WTC11 (cell line): ENCODE measurements at regions of chr11 and their contacts with region 1.

Region 1: DNA sequence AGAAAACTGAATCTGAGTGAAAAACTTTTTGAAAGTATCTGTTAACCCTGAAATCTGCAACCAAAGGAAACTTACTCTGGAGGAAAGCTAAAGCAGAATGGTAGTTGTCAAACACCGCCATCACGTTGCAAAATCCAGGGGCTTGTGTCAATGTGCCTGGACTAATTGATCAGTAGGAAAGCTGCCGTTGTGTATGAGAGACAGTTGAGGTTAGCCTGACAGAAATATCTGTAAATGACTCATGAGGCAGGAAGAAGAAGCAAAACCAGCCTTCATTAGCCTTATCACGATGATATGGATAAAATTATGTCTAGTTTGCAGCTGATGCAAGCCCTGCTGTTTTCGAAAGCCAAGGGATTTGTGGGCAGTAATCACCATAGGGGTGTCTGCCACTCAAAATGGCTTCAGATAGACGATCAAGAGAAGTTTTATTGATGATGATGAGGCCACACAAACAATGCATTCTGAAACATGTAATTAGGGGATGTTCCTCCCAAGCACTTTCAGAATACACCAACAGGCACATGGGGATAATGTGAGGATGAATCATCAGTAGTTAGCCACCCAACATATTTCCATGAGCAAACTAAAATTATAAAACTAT is 8.9 kb downstream of the SCGB1A1 start:
- DNase-seq: no peak
- ATAC-seq: no peak
- H3K4me3 Mint-ChIP-seq: no peak overlapping the region
- H3K27ac Mint-ChIP-seq: peak overlapping the region; percentile 2; the same call in 1 of the 2 replicates
- H3K4me1 Mint-ChIP-seq: peaks cover 8% of the 10 kb centered on the region
- H3K27me3 Mint-ChIP-seq: peaks cover 22% of the 10 kb centered on the region
- CTCF ChIP-seq: no peak

Region 2: GRCh38 chr11:62411524-62411923 is 16.2 kb before region 1 on chr11:
- CTCF ChIA-PET with region 1: interaction called, 31 read pairs
- POLR2A ChIA-PET with region 1: no interaction called
- DNase-seq: no peak
- ATAC-seq: no peak
- H3K4me3 Mint-ChIP-seq: no peak overlapping the region
- H3K27ac Mint-ChIP-seq: no peak overlapping the region
- H3K4me1 Mint-ChIP-seq: no peaks in the 10 kb centered on the region
- H3K27me3 Mint-ChIP-seq: no peaks in the 10 kb centered on the region; the same call in 1 of the 2 replicates
- CTCF ChIP-seq: no peak

Region 3: DNA sequence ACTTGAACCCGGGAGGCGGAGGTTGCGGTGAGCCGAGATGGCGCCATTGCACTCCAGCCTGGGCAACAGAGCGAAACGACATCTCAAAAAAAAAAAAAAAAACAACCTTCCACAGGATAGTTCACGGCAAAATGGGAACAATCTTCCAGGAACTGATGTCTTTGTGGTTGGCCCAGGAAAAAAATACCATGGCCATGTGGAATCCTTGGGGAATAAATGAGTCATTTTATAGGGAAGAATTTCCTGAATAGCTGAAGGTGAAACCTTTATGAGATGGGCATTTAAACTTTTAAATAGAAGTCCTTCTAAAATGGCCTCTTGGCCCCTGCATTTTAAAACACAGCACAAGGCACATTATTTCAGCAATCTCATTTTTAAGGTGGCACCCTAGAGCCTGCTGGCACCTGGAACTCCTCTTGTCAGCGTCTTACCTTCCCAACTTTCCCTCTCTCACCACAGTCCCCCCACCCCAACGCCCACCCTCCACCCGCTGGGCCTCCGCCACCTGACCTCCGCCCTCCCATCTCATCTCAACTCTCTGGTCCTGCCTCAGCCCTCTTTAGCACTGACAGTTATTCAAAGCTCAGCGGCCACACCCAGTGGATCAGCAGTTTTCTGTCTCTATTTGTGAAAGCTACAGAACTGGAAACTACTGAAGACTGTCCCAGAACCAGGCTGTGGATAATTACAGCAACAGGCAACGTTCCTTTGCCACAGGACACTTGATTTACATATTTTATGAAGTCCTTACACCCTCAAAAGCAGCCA is 34.2 kb after region 1 on chr11:
- CTCF ChIA-PET with region 1: interaction called, 19 read pairs
- POLR2A ChIA-PET with region 1: no interaction called
- DNase-seq: no peak
- ATAC-seq: no peak
- H3K4me3 Mint-ChIP-seq: no peak overlapping the region
- H3K27ac Mint-ChIP-seq: no peak overlapping the region
- H3K4me1 Mint-ChIP-seq: peaks cover 2% of the 10 kb centered on the region; the same call in 1 of the 2 replicates
- H3K27me3 Mint-ChIP-seq: no peaks in the 10 kb centered on the region
- CTCF ChIP-seq: no peak

Region 4: DNA sequence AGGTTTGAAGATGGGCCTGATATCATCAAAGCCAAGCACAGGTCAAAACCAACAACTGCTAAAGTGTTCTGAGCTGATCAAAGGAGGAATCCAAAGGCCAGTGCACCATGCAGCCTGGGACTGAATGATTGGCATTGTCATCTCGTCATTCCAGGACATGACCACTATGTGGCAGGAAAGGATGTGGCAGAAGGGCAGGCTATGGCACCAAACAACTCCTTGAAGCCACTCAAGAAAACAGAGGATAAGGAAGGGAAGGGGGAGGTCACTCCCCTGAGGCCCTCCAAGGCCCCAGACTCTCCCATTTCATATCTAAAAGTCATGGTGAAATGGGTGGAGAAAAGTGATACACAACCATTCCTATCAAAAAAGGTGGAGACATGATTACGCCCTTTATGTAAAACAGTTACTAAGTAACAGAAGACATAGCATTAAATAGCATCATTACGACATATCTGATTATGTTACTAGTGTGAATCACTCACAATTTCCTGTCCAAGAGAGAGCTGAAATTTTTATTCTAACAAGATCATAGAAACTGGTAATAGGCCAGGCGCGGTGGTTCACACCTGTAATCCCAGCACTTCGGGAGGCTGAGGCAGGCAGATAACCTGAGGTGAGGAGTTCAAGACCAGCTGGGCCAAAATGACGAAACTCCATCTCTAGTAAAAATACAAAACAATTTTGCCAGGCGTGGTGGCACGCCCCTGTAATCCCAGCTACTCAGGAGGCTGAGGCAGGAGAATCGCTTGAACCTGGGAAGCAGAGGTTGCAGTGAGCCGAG is 69.6 kb after region 1 on chr11:
- CTCF ChIA-PET with region 1: interaction called, 55 read pairs
- POLR2A ChIA-PET with region 1: no interaction called
- DNase-seq: peak; percentile 43
- ATAC-seq: peak; percentile 75
- H3K4me3 Mint-ChIP-seq: no peak overlapping the region
- H3K27ac Mint-ChIP-seq: peak overlapping the region; percentile 19; the same call in 1 of the 2 replicates
- H3K4me1 Mint-ChIP-seq: peaks cover 26% of the 10 kb centered on the region
- H3K27me3 Mint-ChIP-seq: peaks cover 11% of the 10 kb centered on the region
- CTCF ChIP-seq: no peak

Region 5: GRCh38 chr11:62565100-62565802 is 137.5 kb after region 1 on chr11:
- CTCF ChIA-PET with region 1: interaction called, 106 read pairs
- POLR2A ChIA-PET with region 1: interaction called, 11 read pairs
- DNase-seq: no peak
- ATAC-seq: no peak
- H3K4me3 Mint-ChIP-seq: no peak overlapping the region
- H3K27ac Mint-ChIP-seq: 0 out of 2 replicates have a peak overlapping the region, but pooled peaks have one; percentile 21
- H3K4me1 Mint-ChIP-seq: peaks cover 42% of the 10 kb centered on the region
- H3K27me3 Mint-ChIP-seq: no peaks in the 10 kb centered on the region
- CTCF ChIP-seq: no peak

Region 6: DNA sequence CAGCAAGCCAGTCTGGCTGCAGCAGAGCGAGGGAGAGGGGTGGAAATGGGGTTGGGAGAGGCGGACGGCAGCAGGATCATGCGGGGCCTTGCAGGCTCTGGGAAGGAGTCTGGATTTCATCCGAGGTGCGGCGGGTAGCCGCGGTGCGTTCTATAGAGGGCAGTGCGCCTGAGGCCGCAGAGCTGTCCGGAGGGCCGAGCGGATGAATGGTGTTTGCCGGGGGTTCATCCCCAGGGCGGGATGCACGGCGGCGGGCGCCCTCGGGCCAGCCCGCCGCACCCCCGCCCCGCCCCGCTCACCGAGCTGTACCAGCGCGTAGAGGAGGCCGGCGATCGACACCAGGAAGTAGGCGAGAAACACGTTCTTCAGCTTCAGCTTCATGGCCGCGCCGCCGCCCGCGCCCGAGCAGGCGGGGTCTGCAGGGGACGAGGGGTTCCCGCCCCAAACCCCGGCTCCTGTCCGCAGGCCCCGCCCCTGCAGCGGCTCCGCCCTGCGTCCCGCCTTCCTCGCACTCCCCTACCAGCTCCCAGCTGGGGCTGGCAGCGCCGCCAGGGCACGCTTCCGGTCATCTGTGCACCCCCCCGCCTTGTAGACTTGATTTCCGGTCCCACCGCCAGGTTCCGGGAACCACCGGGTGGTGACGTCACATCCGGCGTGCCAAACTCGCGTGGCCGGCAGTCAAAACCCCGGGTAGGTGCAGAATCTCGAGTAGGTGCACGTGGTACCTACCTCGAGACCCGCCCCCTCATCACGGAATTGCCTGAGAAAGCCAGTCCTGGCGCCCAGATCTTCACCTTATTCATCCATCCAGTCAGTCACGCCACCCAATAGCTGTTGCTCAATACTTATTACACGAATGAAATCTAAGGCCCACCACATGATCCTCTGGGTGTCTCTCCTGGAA is 194.1 kb after region 1 on chr11 and contains the start of gene B3GAT3:
- CTCF ChIA-PET with region 1: interaction called, 12 read pairs
- POLR2A ChIA-PET with region 1: no interaction called
- DNase-seq: peak; percentile 99
- ATAC-seq: peak; percentile 97
- H3K4me3 Mint-ChIP-seq: peak within 1 kb of the TSS; percentile 97
- H3K27ac Mint-ChIP-seq: peak within 1 kb of the TSS; percentile 93
- H3K4me1 Mint-ChIP-seq: peaks cover 16% of the 10 kb centered on the region
- H3K27me3 Mint-ChIP-seq: no peaks in the 10 kb centered on the region
- CTCF ChIP-seq: no peak
- total RNA-seq, gene B3GAT3: 41.2 to 43.9 TPM (median 43.3 TPM) in 3 replicates